Transverse colon (tissue), 4 donors: ENCODE measurements at regions of chr12 and their contacts with region 1.

Region 1: DNA sequence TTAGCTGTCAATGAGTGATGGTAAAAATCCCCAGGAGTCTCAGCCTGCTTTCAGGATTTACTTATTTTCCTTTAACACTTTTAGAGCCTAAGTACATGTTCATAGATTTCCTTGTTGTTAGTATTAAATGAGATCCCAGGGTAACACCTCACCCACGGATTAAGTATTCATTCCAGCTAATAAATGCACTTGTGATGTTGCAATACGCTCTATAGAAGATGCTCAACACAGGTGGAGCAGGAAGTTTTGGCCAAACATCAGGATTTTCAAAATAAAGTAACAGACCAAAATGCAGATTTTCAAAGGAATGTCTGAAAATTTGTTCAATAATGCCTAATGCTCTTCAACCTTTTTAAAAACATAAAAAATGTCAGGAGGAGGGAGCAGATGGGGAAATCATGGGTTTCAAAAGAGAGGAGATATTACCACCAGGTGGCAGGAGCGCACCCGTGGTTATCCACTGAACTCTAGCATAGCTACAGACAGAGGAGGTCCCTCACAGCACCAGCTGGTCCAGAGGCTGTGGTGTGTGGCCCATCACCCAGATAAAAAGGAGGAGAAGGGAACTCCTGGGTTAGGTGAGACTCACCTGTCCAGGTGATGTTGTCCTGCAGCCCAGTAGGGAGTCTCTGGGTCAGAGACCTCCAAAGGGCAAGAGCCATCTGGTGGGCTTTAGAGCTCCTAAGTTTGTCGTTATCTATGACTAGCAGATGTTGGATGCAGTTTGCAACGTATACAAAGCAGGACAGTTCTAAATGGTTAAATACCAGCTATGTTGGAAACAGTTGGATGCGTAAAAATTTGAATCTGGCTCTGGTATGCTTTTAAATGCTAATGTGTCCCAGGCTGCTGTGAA is 1158.4 kb upstream of the TMEM132C start:
- DNase-seq: peak; percentile 44
- H3K4me3 ChIP-seq: no peak overlapping the region
- H3K27ac ChIP-seq: no peak overlapping the region
- H3K4me1 ChIP-seq: no peaks in the 10 kb centered on the region
- H3K27me3 ChIP-seq: no peaks in the 10 kb centered on the region
- CTCF ChIP-seq: peak; percentile 57 to 63 (median 60)
- EP300 ChIP-seq: no peak
- POLR2A ChIP-seq: no peak

Region 2: GRCh38 chr12:127060310-127060847 is 48.2 kb before region 1 on chr12:
- in situ Hi-C with region 1: no loop called
- intact Hi-C with region 1: no loop called
- DNase-seq: peak; percentile 70
- H3K4me3 ChIP-seq: peak overlapping the region in 2 of 4 donors; percentile 31 to 45
- H3K27ac ChIP-seq: peak overlapping the region in 3 of 4 donors; percentile 25 to 66 (median 61)
- H3K4me1 ChIP-seq: peaks cover 0 to 2% (median 0%) of the 10 kb centered on the region in 4 donors
- H3K27me3 ChIP-seq: no peaks in the 10 kb centered on the region
- CTCF ChIP-seq: no peak
- EP300 ChIP-seq: no peak
- POLR2A ChIP-seq: peak; percentile 79

Region 3: DNA sequence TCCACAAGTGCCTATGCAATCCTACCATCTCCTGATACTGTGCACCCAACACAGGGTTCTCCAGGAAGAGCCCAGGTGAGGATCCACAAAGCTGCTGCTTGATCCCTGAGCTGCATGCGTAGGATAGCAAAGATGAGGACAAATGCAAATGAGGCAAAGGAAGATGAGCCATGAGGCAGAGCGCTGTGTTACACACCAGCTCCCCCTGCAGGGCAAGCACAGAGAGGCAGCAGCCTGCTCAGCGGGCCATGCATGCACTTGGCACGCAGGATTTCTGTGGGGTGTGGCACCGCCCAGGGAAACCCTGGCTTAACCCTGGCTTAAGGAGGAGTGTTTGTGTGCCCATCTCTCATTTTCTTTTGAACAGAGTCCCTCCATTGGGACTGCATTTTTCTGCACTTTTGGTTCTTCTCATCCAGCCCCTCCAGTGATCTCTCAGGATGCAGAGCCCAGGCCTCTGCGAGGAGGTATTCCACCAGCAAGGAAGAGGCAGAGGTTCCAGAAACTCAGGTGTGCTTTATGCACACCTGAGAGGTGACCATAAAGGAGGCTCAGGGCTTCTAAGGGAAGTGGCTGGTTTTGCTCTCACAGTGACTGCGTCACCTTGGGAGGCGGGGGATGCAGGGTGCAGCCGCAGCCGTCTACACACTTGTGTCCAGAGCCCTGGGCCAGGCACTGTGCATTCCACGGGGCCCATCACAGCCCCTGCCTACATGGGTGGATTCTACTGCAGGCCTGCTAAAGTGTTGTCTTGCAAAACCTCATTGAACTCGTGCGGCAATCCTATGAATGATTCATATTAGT is 185.1 kb after region 1 on chr12:
- in situ Hi-C with region 1: loop called in 1 of 4 experiments (anchors 10 kb)
- intact Hi-C with region 1: no loop called
- DNase-seq: peak; percentile 55
- H3K4me3 ChIP-seq: no peak overlapping the region
- H3K27ac ChIP-seq: no peak overlapping the region
- H3K4me1 ChIP-seq: no peaks in the 10 kb centered on the region
- H3K27me3 ChIP-seq: no peaks in the 10 kb centered on the region
- CTCF ChIP-seq: peak; percentile 39 to 73 (median 60)
- EP300 ChIP-seq: no peak
- POLR2A ChIP-seq: no peak

Region 4: DNA sequence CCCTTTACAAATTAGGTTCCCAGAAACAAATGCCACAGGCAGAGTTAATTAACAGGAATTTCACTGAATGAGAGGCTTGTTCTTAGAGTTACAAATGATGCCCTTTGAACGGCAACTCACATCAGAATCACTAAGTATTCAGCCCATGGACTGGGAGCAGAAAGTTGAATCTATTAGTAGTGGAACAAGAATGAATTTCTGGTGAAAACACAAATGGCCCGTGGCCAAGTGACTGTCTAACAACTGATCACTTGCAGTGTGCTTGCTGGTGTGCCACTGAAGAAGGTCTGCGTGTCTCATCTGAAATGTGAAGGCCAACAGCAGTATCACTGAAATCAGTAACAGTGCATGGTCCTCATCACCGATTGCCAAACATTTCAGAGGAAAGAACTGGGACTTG is 265.0 kb after region 1 on chr12:
- in situ Hi-C with region 1: loop called in 1 of 4 experiments (anchors 25 kb)
- intact Hi-C with region 1: loop called (anchors 2 kb)
- DNase-seq: no peak
- H3K4me3 ChIP-seq: no peak overlapping the region
- H3K27ac ChIP-seq: no peak overlapping the region
- H3K4me1 ChIP-seq: no peaks in the 10 kb centered on the region
- H3K27me3 ChIP-seq: no peaks in the 10 kb centered on the region
- CTCF ChIP-seq: no peak
- EP300 ChIP-seq: no peak
- POLR2A ChIP-seq: no peak

Region 5: DNA sequence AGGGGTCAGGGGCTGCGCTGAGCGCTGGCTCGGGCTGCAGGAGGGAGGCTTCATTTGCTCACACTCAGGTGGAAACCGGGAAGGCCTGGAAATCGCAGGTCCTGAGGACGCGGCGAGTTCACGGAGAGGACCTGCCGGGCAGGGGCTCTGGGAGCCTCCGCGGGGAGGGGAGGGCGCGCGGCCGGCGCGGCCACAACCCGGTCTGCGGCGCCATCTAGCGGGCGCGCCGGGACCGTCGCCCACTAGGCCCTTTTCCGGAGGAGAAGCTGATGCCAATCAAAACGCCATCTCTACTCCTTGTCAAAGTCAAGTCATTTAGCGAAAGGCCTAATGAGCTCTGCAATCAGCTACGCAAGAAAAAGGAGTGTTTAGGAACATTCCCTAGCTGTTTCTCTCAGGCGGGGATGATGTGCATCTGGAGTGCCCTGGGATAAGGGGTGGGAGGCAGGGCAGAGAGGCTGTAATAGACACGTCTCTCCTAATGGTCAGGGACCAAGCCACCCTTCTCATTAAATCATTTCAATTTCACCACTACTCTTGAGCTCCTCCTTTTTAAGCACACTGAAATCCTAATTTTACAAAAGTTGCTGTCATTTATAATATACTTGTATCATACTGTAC is 272.6 kb after region 1 on chr12:
- in situ Hi-C with region 1: loop called in 1 of 4 experiments (anchors 25 kb)
- intact Hi-C with region 1: no loop called
- DNase-seq: peak; percentile 21
- H3K4me3 ChIP-seq: no peak overlapping the region
- H3K27ac ChIP-seq: no peak overlapping the region
- H3K4me1 ChIP-seq: peaks cover 0 to 6% (median 5%) of the 10 kb centered on the region in 4 donors
- H3K27me3 ChIP-seq: peaks cover 4% of the 10 kb centered on the region
- CTCF ChIP-seq: peak; percentile 39 to 80 (median 68)
- EP300 ChIP-seq: no peak
- POLR2A ChIP-seq: no peak

Region 6: GRCh38 chr12:127677537-127678131 is 569.0 kb after region 1 on chr12:
- in situ Hi-C with region 1: loop called in 1 of 4 experiments (anchors 25 kb)
- intact Hi-C with region 1: no loop called
- DNase-seq: peak; percentile 56
- H3K4me3 ChIP-seq: no peak overlapping the region
- H3K27ac ChIP-seq: no peak overlapping the region
- H3K4me1 ChIP-seq: no peaks in the 10 kb centered on the region
- H3K27me3 ChIP-seq: no peaks in the 10 kb centered on the region
- CTCF ChIP-seq: peak; percentile 56 to 68 (median 61)
- EP300 ChIP-seq: no peak
- POLR2A ChIP-seq: no peak